ENCODE measurements at regions of chr17 and their contacts with region 1.

Region 1: GRCh38 chr17:31842183-31843069 is 16.6 kb downstream of the COPRS start:
- H3K4me3 ChIP-seq: no peak overlapping the region
- H3K27ac ChIP-seq: no peak overlapping the region
- H3K4me1 ChIP-seq: no peaks in the 10 kb centered on the region
- CTCF ChIP-seq: peak; percentile 88

Region 2: DNA sequence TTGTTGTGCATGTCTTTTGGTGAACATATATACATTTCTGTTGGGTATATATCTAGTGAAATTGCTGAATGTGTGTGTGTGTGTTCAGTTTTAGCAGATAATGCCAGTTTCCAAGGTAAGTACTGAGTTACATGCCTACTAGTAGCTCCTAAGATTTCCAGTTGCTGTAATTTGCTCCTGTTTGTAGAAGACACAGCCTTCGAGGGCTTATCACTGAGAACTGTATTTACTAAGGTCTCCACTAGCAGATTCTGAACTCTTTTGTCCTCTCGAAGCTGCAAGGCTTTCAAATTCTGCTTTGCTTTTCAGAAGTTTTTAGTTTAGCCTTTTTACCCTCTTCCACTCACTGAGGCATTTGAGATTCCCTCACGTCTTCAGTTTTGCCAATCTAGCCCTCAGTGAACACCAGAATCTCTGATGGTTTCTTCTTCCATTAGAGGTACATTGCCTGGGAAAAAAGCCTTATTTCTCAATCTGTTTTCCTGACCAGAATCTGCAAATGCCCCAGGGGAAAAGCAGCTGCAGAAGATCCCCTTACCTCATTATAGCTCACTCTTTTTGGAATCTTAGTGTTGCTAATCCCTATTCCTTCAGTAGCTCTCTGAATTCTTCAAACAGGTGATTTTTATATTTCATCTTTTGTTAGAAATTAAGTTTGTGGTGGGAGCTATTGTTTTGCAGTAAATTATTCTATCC is 694.8 kb before region 1 on chr17:
- CTCF ChIA-PET with region 1: no interaction called
- POLR2A ChIA-PET with region 1: no interaction called
- H3K4me3 ChIP-seq: no peak overlapping the region
- H3K27ac ChIP-seq: peak overlapping the region; percentile 20; the same call in 1 of the 2 replicates
- H3K4me1 ChIP-seq: peaks cover 15% of the 10 kb centered on the region
- CTCF ChIP-seq: no peak

Region 3: DNA sequence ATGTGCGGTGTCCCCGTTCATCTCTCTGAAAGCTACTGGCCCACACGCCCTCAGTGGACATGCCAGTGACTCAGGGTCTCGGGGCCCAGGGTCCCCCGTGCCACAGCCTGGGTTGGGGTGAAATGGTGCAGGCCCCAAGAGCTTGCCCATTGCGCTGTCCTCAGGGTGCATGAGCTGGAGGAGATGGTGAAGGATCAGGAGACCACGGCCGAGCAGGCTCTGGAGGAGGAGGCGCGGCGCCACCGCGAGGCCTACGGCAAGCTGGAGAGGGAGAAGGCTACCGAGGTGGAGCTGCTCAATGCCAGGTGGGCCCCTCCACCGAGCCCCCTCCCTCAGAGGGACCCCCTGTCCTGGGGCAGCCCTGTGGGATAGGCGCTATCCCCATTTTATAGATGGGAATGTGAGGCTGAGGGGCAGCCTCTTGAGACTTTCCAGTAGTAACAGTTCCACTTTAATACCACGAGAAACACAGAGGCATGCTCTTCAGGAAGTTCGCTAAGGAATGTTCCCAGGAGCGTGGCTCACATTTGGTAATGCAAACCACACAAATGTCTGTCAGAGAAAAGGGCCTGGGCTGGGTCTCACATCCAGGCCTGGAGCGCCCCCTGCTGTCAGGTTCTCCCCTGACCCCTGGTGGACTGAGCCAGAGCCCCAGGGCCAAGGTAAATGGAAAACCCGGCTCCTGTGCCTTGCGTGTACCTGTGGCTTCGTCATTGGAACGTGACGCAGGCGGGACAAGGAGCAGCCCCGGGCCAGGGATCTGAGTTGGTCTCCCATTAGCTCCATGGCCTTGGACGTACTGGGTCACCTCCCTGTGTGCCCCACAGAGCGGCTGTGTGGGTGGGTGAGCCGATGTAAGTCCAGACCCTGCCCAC is 317.3 kb before region 1 on chr17:
- CTCF ChIA-PET with region 1: interaction called, 11 read pairs
- POLR2A ChIA-PET with region 1: no interaction called
- H3K4me3 ChIP-seq: no peak overlapping the region
- H3K27ac ChIP-seq: no peak overlapping the region
- H3K4me1 ChIP-seq: no peaks in the 10 kb centered on the region; the same call in 1 of the 2 replicates
- CTCF ChIP-seq: peak; percentile 80

Region 4: DNA sequence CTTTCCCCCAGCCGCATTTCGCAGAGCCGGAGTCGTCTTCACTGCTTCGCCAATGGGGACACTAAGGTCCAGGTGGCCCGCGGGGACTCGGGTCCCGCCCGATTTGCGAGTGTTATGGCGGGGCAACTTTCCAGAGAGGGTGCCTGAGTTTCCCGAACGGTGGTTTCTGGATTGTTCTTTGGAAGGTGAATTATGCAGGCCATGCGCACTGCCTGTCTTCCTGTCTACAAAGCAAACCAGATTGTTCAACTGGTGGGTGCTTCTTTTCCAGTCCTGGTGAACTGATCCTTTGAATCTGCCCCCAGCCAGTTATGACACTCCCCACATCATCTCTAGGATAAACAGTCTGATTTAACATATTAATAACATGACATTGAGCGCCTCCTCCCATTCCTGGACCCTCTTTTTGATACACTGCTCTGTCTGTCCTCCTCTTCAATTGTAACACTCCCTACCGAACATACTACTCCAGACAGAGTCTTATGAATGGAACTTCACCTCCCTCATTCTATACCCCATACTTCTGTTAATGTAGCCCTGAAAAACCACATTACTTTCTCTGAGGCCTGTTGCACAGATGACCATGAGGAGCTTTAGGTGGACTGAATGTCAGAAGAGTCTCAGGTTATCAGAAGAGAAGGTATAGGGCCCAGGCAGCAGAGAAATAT is 291.9 kb before region 1 on chr17:
- CTCF ChIA-PET with region 1: interaction called, 11 read pairs
- POLR2A ChIA-PET with region 1: no interaction called
- H3K4me3 ChIP-seq: peak overlapping the region; percentile 31
- H3K27ac ChIP-seq: peak overlapping the region; percentile 63
- H3K4me1 ChIP-seq: no peaks in the 10 kb centered on the region
- CTCF ChIP-seq: no peak

Region 5: DNA sequence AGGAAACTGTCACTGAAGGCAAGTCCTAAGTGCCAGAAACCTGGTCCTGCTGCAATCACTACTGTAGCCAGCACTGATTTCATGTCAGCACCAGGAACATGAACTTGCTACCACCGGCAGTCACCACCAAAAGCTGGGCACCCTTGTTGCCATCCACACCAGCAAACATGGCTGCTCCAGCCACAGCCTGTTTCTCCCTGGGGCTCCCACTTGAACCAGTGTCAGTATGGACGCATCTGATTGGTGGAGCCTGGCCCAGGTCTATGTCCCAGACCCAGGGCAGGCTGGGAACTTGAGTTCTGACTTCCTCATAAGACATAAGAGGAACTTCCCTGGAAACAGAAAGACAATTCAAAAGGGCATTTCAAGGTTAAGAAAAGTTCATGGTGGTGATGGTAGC is 39.9 kb before region 1 on chr17:
- CTCF ChIA-PET with region 1: no interaction called
- POLR2A ChIA-PET with region 1: no interaction called
- H3K4me3 ChIP-seq: no peak overlapping the region
- H3K27ac ChIP-seq: no peak overlapping the region
- H3K4me1 ChIP-seq: no peaks in the 10 kb centered on the region
- CTCF ChIP-seq: no peak

Region 6: GRCh38 chr17:31830971-31831858 is 11.2 kb before region 1 on chr17:
- CTCF ChIA-PET with region 1: interaction called, 20 read pairs
- POLR2A ChIA-PET with region 1: no interaction called
- H3K4me3 ChIP-seq: no peak overlapping the region
- H3K27ac ChIP-seq: no peak overlapping the region
- H3K4me1 ChIP-seq: no peaks in the 10 kb centered on the region
- CTCF ChIP-seq: no peak

Region 7: DNA sequence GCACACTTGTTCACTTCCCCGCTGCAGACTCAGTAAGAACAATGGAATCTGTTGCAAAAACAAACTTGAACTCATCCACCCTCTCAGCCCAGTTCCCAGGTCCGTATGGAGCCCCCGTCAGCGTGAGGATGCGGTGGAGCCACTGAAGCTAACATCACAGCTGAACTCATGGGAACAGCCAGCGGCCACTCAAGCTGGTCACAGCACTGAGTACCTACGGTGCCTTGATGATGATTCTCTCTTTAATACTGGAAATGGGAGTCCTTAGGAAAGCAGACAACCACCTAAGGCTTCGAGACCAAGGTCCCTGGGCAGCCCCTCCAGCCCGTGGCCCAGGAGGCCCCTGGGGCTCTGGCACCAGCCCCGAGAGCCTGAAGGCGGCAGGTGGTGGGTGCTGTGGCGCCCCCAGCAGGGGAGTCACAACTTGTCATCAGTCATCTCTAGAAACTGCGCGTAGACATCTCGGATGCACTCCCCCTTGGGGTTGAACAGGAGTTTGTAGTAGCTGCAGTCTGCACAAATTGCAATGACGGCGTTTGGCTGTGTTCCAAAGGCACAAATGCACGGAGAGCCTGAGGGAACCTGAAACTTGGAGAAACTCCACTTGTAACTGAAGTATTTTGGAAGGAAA is 268.8 kb after region 1 on chr17:
- CTCF ChIA-PET with region 1: no interaction called
- POLR2A ChIA-PET with region 1: no interaction called
- H3K4me3 ChIP-seq: no peak overlapping the region
- H3K27ac ChIP-seq: no peak overlapping the region
- H3K4me1 ChIP-seq: peaks cover 6% of the 10 kb centered on the region
- CTCF ChIP-seq: peak; percentile 85

Region 8: GRCh38 chr17:32870027-32870670 is 1027.7 kb after region 1 on chr17:
- CTCF ChIA-PET with region 1: no interaction called
- POLR2A ChIA-PET with region 1: no interaction called
- H3K4me3 ChIP-seq: no peak overlapping the region
- H3K27ac ChIP-seq: no peak overlapping the region
- H3K4me1 ChIP-seq: peaks cover 4% of the 10 kb centered on the region
- CTCF ChIP-seq: no peak